Heart right ventricle (tissue), 16 donors: ENCODE measurements at regions of chr19 and their contacts with region 1.

Region 1: GRCh38 chr19:10403137-10404021 is at the start of gene CDC37:
- DNase-seq: peak; percentile 95 to 97
- ATAC-seq: peak; percentile 92 to 97 (median 96)
- H3K4me3 ChIP-seq: peak within 1 kb of the TSS; percentile 63 to 99 (median 96)
- H3K27ac ChIP-seq: peak within 1 kb of the TSS; percentile 67 to 94 (median 89)
- H3K4me1 ChIP-seq: peaks cover 33 to 83% (median 59%) of the 10 kb centered on the region in 9 donors
- H3K27me3 ChIP-seq: peaks cover 6 to 30% (median 25%) of the 10 kb centered on the region in 7 donors
- CTCF ChIP-seq: no peak
- total RNA-seq, gene CDC37: 106 to 179 (median 121) TPM

Region 2: DNA sequence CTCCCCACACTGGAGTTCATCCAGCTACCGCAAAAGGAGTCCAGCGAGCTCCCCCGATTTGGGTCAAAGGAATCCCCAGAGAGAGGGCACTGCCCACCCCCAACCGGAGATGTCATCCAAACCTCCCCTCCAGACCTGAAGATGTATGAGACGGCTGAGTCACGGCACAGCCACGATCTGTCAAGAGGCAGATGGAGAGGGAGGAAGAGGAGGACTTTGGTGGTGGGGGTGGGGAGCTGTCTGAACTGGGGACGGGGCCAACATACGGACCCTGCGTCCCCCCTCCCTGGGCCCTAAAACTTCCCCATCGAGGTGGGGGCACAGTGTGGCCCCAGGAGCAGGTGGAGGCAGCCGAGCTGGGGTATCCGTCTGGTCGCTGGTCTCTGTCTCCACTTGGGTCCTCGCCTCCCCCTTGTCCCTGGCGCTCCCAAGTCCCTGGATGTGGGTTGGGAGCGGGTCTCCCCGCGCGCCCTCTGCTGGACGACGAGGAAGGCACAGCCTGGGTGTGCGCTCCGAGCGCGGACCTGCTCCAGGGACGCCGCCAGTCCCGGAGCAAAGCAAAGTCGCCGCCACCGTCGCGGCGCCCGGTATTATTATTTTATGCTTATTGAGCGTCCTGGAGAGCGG is 20.7 kb after region 1 on chr19:
- intact Hi-C with region 1: loop called in 5 of 10 experiments (anchors 1 to 2 kb)
- DNase-seq: peak; percentile 75 to 88
- ATAC-seq: peak; percentile 83 to 95 (median 91)
- H3K4me3 ChIP-seq: peak overlapping the region in 8 of 10 donors; percentile 21 to 53 (median 39)
- H3K27ac ChIP-seq: peak overlapping the region in 2 of 10 donors; percentile 10 to 89
- H3K4me1 ChIP-seq: peaks cover 16 to 89% (median 33%) of the 10 kb centered on the region in 9 donors
- H3K27me3 ChIP-seq: peaks cover 42 to 65% (median 56%) of the 10 kb centered on the region in 7 donors
- CTCF ChIP-seq: peak; percentile 81 to 99 (median 97)

Region 3: GRCh38 chr19:10478903-10479384 is 75.6 kb after region 1 on chr19:
- intact Hi-C with region 1: loop called in 1 of 10 experiments (anchors 10 kb)
- DNase-seq: peak; percentile 88 to 94
- ATAC-seq: peak; percentile 93 to 99 (median 98)
- H3K4me3 ChIP-seq: peak overlapping the region in 9 of 10 donors; percentile 38 to 57 (median 45)
- H3K27ac ChIP-seq: peak overlapping the region in 5 of 10 donors; percentile 1 to 26 (median 20)
- H3K4me1 ChIP-seq: peaks cover 0 to 20% (median 6%) of the 10 kb centered on the region in 9 donors
- H3K27me3 ChIP-seq: no peaks in the 10 kb centered on the region
- CTCF ChIP-seq: peak; percentile 78 to 94 (median 86)

Region 4: GRCh38 chr19:10565567-10566407 is 162.4 kb after region 1 on chr19 and contains the start of gene KRI1:
- intact Hi-C with region 1: loop called in 5 of 10 experiments (anchors 5 to 10 kb)
- DNase-seq: peak; percentile 98 to 99
- ATAC-seq: peak; percentile 85 to 92 (median 88)
- H3K4me3 ChIP-seq: peak within 1 kb of the TSS; percentile 62 to 94 (median 84)
- H3K27ac ChIP-seq: peak within 1 kb of the TSS; percentile 72 to 94 (median 90)
- H3K4me1 ChIP-seq: peaks cover 4 to 45% (median 39%) of the 10 kb centered on the region in 9 donors
- H3K27me3 ChIP-seq: no peaks in the 10 kb centered on the region
- CTCF ChIP-seq: peak in 7 of 9 donors; percentile 16 to 50 (median 30)
- total RNA-seq, gene KRI1: 8.4 to 14.2 (median 10.3) TPM

Region 5: DNA sequence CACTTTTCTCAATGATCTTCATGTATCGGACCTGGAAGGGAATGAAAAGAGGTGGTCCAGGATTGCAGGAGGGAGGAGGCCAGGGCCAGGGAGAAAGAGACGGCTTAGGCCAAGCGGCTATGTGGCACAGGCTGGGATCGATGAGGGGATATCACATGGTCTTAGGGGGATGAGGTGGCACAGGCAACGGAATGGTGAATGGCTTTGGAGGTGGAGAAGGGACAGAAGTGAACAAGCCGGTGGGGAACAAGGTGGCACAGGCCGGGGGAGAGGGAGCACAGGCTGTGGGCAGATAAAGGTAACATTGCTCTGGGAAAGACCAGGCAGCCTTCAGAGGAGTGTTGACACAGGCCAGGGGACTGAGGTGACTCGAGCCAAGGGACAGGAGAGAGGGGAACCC is 171.1 kb after region 1 on chr19:
- intact Hi-C with region 1: loop called in 5 of 10 experiments (anchors 5 to 10 kb)
- DNase-seq: no peak
- ATAC-seq: no peak
- H3K4me3 ChIP-seq: no peak overlapping the region
- H3K27ac ChIP-seq: no peak overlapping the region
- H3K4me1 ChIP-seq: peaks cover 2 to 14% (median 9%) of the 10 kb centered on the region in 9 donors
- H3K27me3 ChIP-seq: peaks cover 0 to 5% (median 0%) of the 10 kb centered on the region in 7 donors
- CTCF ChIP-seq: no peak